Psoas muscle (tissue), 8 donors: ENCODE measurements at regions of chr7 and their contacts with region 1.

Region 1: DNA sequence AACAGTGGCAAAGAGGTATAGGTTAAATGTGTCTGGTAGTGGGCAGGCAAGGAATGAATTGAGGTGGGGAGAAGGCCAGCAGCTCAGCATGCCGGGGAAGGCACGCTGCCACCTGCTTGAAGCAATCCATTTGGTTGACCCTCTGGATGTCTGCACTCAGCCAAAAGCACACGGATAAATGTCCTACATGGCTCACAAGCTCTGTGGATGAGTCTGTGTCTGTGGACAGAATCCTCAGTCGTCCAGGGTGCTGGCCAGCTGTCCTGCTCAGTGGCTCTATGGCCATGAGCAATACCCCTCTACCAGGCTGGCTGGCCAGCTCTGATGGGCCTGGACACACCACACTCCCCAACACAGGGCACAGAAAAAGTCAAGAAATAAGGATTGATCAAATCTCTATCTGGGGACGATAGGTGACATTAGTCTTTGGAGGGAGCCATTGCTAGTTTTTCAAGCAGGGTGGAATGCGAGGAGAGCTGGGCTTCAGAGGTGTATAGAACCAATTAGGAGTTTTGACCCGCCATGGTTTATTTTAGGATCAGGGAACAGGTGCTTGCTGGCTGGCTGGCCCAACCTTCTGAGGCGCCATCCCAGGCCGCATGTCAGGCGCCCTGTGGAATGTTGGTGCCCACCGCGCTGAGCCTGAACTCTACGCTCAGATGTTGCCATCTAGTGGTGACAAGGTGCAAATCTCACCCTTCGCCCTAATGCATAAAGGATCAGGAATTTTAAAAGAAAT is 493.4 kb downstream of the TNS3 start:
- DNase-seq: peak; percentile 54 to 61
- ATAC-seq: peak; percentile 91 to 98 (median 96)
- H3K4me3 ChIP-seq: no peak overlapping the region
- H3K27ac ChIP-seq: no peak overlapping the region
- H3K4me1 ChIP-seq: no peaks in the 10 kb centered on the region
- H3K27me3 ChIP-seq: no peaks in the 10 kb centered on the region
- CTCF ChIP-seq: peak; percentile 91

Region 2: GRCh38 chr7:45923290-45923689 is 1165.2 kb before region 1 on chr7:
- intact Hi-C with region 1: loop called (anchors 2 kb)
- DNase-seq: peak; percentile 73 to 83
- ATAC-seq: peak in 3 of 4 donors; percentile 60 to 74 (median 63)
- H3K4me3 ChIP-seq: peak overlapping the region; percentile 65
- H3K27ac ChIP-seq: no peak overlapping the region
- H3K4me1 ChIP-seq: peaks cover 9% of the 10 kb centered on the region
- H3K27me3 ChIP-seq: peaks cover 0 to 53% (median 16%) of the 10 kb centered on the region in 3 donors
- CTCF ChIP-seq: peak; percentile 85

Region 3: DNA sequence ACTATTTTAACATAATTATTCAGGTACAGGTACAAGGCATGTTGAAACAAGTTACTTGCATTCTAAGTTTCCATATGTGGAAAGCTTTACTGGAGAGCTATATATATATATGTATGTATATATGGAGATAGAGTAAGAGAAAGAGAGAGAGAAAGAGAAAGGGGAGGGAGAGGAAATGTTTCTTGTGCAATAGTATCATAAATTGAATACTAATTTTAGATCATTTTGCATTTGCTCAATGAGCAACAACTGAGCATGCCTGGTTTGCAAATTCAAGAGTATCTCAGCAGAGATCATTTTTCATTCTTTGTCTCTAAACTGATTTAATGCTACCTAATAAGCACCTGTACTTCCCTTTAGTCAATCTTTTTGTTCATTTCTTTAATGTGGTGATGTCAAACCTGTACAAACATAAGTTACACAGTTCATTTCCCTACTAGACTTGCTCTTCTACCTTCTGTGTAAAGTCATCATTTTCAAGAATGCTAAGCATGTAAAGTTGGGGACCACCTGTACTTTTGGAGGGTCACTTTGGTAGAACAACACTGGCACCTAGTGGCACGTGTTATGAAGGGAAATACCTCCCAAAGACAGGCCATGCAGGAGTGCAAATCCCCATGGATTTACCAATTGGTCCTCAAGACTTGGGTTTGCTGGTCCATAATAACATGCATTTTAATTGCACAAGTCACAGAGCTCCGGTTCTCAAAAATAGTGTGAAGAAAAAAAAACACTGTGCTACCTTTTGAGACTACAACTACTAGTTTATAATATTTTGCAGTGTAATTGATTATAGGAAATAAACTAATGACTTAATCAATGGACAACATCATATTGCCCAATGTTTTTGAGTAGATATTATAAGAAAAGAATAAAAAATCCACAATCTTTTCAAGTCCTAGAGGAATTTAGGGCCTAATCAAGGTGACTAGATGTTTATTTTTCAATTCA is 736.2 kb before region 1 on chr7:
- intact Hi-C with region 1: loop called in 1 of 2 experiments (anchors 10 kb)
- DNase-seq: no peak
- ATAC-seq: no peak
- H3K4me3 ChIP-seq: no peak overlapping the region
- H3K27ac ChIP-seq: no peak overlapping the region
- H3K4me1 ChIP-seq: no peaks in the 10 kb centered on the region
- H3K27me3 ChIP-seq: no peaks in the 10 kb centered on the region
- CTCF ChIP-seq: peak; percentile 49

Region 4: DNA sequence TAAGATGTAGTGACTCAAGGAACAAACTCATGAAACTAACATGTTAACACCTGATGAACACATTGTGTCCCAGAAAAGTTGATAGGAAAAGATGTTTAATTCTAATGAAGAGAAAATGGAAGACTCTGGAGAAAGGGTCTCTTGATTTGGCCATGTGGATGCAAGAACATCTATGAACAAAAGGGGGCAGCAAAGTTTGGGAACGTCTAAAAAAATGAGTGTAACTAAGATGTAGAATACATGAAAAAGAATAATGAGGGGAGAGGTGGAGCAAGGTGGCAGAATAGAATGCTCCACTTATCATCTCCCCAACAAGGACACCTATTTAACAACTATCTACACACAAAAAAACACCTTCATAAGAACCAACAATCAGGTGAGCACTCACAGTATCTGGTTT is 311.7 kb before region 1 on chr7:
- intact Hi-C with region 1: loop called in 1 of 2 experiments (anchors 10 kb)
- DNase-seq: no peak
- ATAC-seq: no peak
- H3K4me3 ChIP-seq: no peak overlapping the region
- H3K27ac ChIP-seq: no peak overlapping the region
- H3K4me1 ChIP-seq: peaks cover 20% of the 10 kb centered on the region
- H3K27me3 ChIP-seq: no peaks in the 10 kb centered on the region
- CTCF ChIP-seq: no peak

Region 5: GRCh38 chr7:46943996-46944395 is 144.5 kb before region 1 on chr7:
- intact Hi-C with region 1: loop called in 1 of 2 experiments (anchors 5 kb)
- DNase-seq: no peak
- ATAC-seq: no peak
- H3K4me3 ChIP-seq: no peak overlapping the region
- H3K27ac ChIP-seq: no peak overlapping the region
- H3K4me1 ChIP-seq: no peaks in the 10 kb centered on the region
- H3K27me3 ChIP-seq: peaks cover 0 to 2% (median 0%) of the 10 kb centered on the region in 3 donors
- CTCF ChIP-seq: no peak

Region 6: GRCh38 chr7:47179812-47180515 is 91.5 kb after region 1 on chr7:
- intact Hi-C with region 1: loop called in 1 of 2 experiments (anchors 5 kb)
- DNase-seq: peak in 1 of 2 donors; percentile 36
- ATAC-seq: peak; percentile 63 to 81 (median 78)
- H3K4me3 ChIP-seq: no peak overlapping the region
- H3K27ac ChIP-seq: no peak overlapping the region
- H3K4me1 ChIP-seq: peaks cover 39% of the 10 kb centered on the region
- H3K27me3 ChIP-seq: no peaks in the 10 kb centered on the region
- CTCF ChIP-seq: peak; percentile 86

Region 7: DNA sequence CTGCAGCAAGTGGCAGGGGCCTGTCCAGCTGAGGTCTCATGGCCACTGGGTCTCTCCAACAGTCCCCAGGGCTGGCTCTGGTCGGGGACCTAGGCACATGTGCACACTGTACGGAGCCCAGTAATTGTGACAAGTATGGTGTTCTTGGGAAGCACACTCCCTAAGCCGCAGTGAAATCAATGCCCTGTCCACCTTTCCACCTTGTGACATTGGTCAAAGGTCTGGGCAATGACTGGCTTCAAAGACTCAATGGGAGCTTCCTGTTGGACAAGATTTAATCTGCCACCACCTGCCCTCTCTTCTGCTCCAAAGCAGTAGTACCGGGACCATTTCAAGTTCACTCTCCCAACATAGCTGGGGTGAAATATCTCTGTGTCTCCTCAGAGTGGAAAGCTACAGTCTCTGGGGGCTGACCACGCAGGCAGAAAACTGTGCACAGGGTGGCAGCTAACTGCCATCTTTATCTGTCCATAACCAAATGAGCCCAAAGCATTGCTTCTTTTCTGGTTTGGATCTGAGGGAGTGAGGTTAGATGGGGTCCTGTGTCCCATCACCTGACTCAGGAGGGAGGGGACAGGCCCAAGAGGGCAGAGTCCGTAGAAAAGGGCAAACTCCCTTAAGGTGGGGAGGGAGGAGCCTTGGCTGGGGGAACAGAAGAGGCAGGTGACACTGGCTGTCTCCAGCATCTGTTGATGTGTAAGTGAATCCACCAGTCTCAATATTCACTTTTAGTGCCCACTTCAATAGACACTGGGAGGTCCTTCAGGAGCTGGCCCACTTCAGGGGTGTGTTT is 185.7 kb after region 1 on chr7:
- intact Hi-C with region 1: no loop called
- DNase-seq: no peak
- ATAC-seq: peak in 2 of 4 donors; percentile 17 to 23
- H3K4me3 ChIP-seq: no peak overlapping the region
- H3K27ac ChIP-seq: no peak overlapping the region
- H3K4me1 ChIP-seq: no peaks in the 10 kb centered on the region
- H3K27me3 ChIP-seq: no peaks in the 10 kb centered on the region
- CTCF ChIP-seq: no peak